Activated CD4-positive, alpha-beta T cell treated with anti-CD3 and anti-CD28 coated beads for 36 hours (primary cell): ENCODE measurements at regions of chr10 and their contacts with region 1.

Region 1: GRCh38 chr10:32256613-32257437 is 90.1 kb downstream of the EPC1 start:
- DNase-seq: peak; percentile 80
- ATAC-seq: peak; percentile 74
- H3K4me3 Mint-ChIP-seq: no peak overlapping the region
- H3K27ac Mint-ChIP-seq: no peak overlapping the region
- H3K4me1 Mint-ChIP-seq: peaks cover 9% of the 10 kb centered on the region
- H3K27me3 Mint-ChIP-seq: no peaks in the 10 kb centered on the region

Region 2: DNA sequence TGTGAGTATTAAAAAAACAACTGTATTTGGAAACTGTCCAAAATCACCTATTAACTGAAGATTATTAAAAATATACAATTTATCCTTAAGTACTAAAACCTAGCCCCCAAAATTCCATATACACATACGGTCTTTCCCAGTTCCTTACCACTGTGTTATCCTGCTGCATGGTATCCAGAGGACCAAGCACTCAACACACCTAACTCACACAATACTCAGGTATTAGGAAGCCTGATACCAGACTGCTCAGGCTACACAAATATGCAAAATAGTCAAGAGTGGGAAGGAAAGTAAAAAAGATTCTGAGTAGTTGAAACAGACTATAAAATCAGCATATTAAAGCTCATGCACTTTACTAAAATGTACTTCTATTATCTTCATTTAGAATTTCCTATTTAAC is 23.0 kb after region 1 on chr10:
- CTCF ChIA-PET with region 1: interaction called, 15 read pairs
- POLR2A ChIA-PET with region 1: no interaction called
- intact Hi-C with region 1: no loop called
- DNase-seq: no peak
- ATAC-seq: no peak
- H3K4me3 Mint-ChIP-seq: no peak overlapping the region
- H3K27ac Mint-ChIP-seq: no peak overlapping the region
- H3K4me1 Mint-ChIP-seq: peaks cover 6% of the 10 kb centered on the region
- H3K27me3 Mint-ChIP-seq: no peaks in the 10 kb centered on the region